ENCODE measurements at regions of chr10 and their contacts with region 1.

Region 1: DNA sequence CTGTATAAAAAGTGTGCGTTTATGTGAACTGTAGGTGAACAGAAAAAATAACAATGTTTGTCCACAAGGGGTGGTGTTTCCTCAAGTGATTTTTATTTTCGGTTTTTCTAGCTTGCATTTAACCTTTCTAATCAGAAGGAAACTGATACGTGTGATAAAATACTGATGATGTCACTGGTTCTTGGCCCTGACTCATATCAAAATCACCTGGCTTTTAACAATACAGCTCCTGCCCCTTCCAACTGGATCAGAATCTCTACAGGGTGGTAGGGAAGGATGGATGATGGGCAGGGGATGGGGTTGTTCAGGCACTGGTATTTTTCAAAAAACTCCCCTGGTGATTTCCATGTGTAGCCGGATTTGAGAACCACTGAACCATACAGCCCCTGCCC is 10.9 kb downstream of the NPFFR1 start:
- DNase-seq: peak; percentile 24
- H3K4me3 Mint-ChIP-seq: no peak overlapping the region
- H3K27ac Mint-ChIP-seq: peak overlapping the region; percentile 56
- H3K4me1 Mint-ChIP-seq: peaks cover 26% of the 10 kb centered on the region
- H3K27me3 Mint-ChIP-seq: no peaks in the 10 kb centered on the region

Region 2: GRCh38 chr10:70191972-70192305 is 81.0 kb before region 1 on chr10:
- CTCF ChIA-PET with region 1: no interaction called
- POLR2A ChIA-PET with region 1: no interaction called
- intact Hi-C with region 1: no loop called
- DNase-seq: no peak
- H3K4me3 Mint-ChIP-seq: no peak overlapping the region
- H3K27ac Mint-ChIP-seq: no peak overlapping the region
- H3K4me1 Mint-ChIP-seq: no peaks in the 10 kb centered on the region
- H3K27me3 Mint-ChIP-seq: no peaks in the 10 kb centered on the region

Region 3: DNA sequence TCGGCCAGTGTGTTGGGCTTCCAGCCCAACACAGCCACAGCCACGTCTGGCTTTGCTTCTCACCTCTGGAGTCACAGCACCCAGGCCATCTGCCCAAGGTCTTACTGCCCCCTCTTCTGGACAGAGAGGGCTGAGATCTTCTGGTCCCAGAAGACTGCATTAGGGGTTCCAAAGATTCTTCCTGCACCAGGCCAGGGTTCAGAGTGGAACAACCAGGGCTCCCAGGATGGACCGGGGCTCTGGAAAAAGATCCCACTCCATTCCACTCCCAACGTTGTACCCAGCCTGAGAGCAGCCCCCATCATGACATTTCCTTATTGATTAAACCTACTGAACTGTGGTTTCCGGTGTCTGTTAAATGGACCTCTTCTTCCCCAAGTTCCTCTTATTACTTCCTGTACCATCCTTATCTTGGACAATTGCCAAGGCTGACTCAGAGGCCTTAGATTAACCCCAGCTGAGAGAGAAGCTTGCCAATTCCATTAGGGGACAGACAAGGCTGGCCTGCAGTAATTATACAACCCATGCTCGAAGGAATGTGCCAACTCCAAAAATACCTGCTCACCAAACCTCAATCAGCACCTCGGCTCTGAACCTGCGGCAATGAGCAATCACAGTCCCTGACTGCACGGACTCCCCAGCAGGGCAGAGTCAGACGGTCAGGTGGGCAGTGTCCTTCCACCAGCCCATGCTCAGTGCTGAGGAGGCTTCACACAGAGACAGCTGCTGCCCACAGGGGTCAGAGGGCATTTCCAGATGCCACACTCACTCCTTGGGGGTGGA is 58.8 kb after region 1 on chr10:
- CTCF ChIA-PET with region 1: no interaction called
- POLR2A ChIA-PET with region 1: no interaction called
- intact Hi-C with region 1: loop called (anchors 2 kb)
- DNase-seq: peak; percentile 20
- H3K4me3 Mint-ChIP-seq: no peak overlapping the region
- H3K27ac Mint-ChIP-seq: no peak overlapping the region
- H3K4me1 Mint-ChIP-seq: peaks cover 14% of the 10 kb centered on the region
- H3K27me3 Mint-ChIP-seq: no peaks in the 10 kb centered on the region

Region 4: DNA sequence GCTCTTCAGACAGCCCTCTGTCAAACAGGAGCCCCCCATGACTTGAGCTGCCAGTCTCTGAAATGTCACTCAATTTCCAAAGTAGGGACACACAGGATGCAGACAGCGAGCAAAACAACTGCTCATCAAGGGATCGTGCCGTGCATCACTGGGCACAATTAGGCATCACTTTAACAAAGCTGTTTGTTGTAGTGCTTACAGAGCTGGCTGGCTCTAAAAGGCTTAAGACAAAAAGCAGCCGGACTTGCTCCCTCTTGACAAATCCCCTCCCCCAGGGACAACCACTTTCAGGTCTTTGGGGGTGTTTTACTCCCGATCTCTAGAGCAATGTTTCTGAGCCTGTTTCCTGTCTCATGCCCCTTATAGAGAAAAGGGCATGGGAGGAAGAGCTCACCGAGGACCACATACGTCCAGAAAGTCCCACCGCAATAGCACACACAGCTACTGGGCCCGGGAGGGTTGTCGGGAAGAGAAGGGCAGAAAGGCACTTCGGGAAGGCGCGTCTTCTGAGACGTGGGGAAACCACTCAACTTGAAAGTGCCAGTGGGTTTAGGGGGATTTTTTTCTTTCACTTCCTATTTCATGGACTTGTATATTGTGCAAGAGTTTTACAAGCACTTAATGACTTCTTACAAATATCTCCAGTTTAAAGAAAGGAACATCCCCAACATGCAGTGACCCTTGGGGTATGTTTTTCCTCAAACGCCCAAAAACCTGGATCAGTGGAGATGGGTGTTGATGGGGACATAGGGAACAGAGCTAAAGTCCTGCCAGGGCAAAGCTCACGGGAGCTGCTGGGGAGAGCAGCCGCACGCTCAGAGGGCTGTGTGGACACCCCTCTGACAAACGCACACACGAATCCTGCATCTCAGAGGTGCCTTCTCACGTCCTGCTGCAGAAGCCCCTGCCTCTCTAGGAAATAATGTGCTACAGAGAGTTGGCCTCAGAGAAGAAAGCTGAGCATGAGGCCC is 82.4 kb after region 1 on chr10:
- CTCF ChIA-PET with region 1: interaction called, 17 read pairs
- POLR2A ChIA-PET with region 1: no interaction called
- intact Hi-C with region 1: loop called (anchors 2 kb)
- DNase-seq: peak; percentile 48
- H3K4me3 Mint-ChIP-seq: peak overlapping the region; percentile 57
- H3K27ac Mint-ChIP-seq: peak overlapping the region; percentile 62
- H3K4me1 Mint-ChIP-seq: peaks cover 28% of the 10 kb centered on the region
- H3K27me3 Mint-ChIP-seq: no peaks in the 10 kb centered on the region

Measured in activated CD4-positive, alpha-beta memory T cell treated with anti-CD3 and anti-CD28 coated beads for 36 hours (primary cell).